Tibial artery (tissue), 4 donors: ENCODE measurements at regions of chr7 and their contacts with region 1.

Region 1: DNA sequence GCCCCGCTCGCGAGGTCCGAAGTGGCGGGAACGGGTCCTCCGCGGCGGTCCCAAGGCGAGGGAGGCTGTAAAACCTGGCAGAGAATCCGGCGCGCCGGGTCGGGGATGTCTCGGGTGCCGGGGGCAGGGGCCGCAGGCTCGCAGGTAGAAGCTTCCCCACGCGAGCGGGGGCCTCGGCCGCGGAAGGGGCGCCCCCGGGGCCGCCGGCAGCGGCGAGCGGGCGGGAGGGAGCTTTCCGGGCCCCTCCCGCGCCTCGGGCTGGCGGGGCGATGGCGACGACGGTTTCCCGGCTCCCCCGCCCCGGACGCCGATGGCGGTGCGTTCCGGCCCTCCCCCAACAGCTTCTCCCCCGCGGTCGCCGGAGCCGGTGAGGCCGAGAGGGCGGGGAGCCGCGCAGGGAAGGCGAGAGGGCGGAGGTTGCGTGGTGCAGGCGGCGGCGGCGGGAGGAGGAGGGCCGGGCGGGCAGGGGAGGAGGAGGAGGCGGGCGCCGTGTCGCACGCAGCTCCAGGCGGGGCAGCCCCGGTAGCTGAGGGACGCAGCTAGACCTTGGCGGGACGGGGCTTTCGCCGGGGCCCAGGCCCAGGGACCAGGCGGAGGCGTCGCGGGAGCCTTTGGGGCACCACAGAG is at the start of gene CUL1:
- DNase-seq: peak; percentile 86 to 94
- H3K4me3 ChIP-seq: peak within 1 kb of the TSS; percentile 69 to 93
- H3K27ac ChIP-seq: peak within 1 kb of the TSS; percentile 92 to 98
- H3K4me1 ChIP-seq: peaks cover 0 to 42% (median 28%) of the 10 kb centered on the region in 4 donors
- H3K27me3 ChIP-seq: no peaks in the 10 kb centered on the region
- CTCF ChIP-seq: no peak

Region 2: GRCh38 chr7:148884299-148885022 is 186.0 kb after region 1 on chr7:
- intact Hi-C with region 1: loop called (anchors 5 kb)
- DNase-seq: peak; percentile 87 to 96
- H3K4me3 ChIP-seq: peak overlapping the region; percentile 72 to 99
- H3K27ac ChIP-seq: peak overlapping the region; percentile 81 to 83
- H3K4me1 ChIP-seq: peaks cover 0 to 11% (median 6%) of the 10 kb centered on the region in 4 donors
- H3K27me3 ChIP-seq: no peaks in the 10 kb centered on the region
- CTCF ChIP-seq: peak in 1 of 2 experiments; percentile 8

Region 3: DNA sequence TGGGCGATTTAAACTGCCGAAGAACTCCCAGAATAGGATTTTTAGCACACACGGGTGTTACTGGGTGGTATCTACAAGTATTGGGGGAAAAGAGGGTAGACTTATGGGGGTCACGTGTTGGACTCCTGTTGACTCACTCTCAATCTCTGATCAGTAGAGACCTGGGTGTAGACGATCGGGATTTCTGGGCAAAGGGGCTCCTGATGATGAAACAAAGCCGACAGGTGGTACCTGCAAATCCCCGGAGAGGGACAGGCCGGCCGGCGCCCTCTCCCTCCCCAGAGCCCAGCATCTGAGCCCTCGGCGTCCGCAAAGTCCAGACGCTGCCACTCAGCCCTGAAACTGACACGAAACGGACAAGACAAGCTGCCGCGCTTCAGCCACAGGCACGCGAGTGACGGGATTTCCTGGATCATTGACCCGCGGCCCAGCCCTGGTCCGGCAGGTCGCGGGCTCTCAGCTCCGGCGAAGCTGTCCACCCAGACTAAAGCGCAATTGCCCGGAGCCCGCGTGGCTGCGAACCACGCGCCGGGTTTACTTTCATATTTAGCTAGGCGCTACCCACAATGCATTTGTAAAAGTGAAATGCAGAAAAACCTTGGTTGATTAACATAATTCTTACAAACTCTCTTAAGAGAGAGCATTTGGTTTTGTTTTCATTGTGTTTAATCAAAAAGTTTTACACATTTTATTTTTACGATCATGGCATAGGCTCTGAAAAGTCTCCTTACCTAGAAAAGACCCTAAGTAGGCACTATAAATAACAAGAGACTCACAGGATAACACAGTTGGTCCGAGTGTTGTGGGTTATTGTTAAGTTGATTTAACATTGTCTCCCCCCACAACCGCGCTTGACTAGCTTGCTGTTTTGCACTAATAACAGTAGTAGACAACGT is 242.4 kb after region 1 on chr7:
- intact Hi-C with region 1: loop called (anchors 2 kb)
- DNase-seq: peak; percentile 80 to 88
- H3K4me3 ChIP-seq: peak overlapping the region; percentile 72 to 76
- H3K27ac ChIP-seq: peak overlapping the region; percentile 84 to 87
- H3K4me1 ChIP-seq: peaks cover 0 to 8% (median 5%) of the 10 kb centered on the region in 4 donors
- H3K27me3 ChIP-seq: no peaks in the 10 kb centered on the region
- CTCF ChIP-seq: no peak

Region 4: GRCh38 chr7:148962823-148963582 is 264.5 kb after region 1 on chr7:
- intact Hi-C with region 1: loop called (anchors 10 kb)
- DNase-seq: peak; percentile 54 to 77
- H3K4me3 ChIP-seq: peak overlapping the region; percentile 50 to 61
- H3K27ac ChIP-seq: peak overlapping the region; percentile 72 to 75
- H3K4me1 ChIP-seq: peaks cover 0 to 21% (median 11%) of the 10 kb centered on the region in 4 donors
- H3K27me3 ChIP-seq: no peaks in the 10 kb centered on the region
- CTCF ChIP-seq: peak; percentile 28 to 69